Aorta (tissue), 5 donors: ENCODE measurements at regions of chr11 and their contacts with region 1.

Region 1: GRCh38 chr11:97934572-97935208 is 1086.1 kb upstream of the CNTN5 start:
- DNase-seq: no peak
- ATAC-seq: no peak
- H3K4me3 ChIP-seq: no peak overlapping the region
- H3K27ac ChIP-seq: no peak overlapping the region
- H3K4me1 ChIP-seq: no peaks in the 10 kb centered on the region
- H3K27me3 ChIP-seq: no peaks in the 10 kb centered on the region

Region 2: GRCh38 chr11:97893612-97894011 is 41.1 kb before region 1 on chr11:
- intact Hi-C with region 1: loop called in 1 of 2 experiments (anchors 2 kb)
- DNase-seq: no peak
- ATAC-seq: no peak
- H3K4me3 ChIP-seq: no peak overlapping the region
- H3K27ac ChIP-seq: no peak overlapping the region
- H3K4me1 ChIP-seq: no peaks in the 10 kb centered on the region
- H3K27me3 ChIP-seq: no peaks in the 10 kb centered on the region